Psoas muscle (tissue), 8 donors: ENCODE measurements at regions of chr6 and their contacts with region 1.

Region 1: DNA sequence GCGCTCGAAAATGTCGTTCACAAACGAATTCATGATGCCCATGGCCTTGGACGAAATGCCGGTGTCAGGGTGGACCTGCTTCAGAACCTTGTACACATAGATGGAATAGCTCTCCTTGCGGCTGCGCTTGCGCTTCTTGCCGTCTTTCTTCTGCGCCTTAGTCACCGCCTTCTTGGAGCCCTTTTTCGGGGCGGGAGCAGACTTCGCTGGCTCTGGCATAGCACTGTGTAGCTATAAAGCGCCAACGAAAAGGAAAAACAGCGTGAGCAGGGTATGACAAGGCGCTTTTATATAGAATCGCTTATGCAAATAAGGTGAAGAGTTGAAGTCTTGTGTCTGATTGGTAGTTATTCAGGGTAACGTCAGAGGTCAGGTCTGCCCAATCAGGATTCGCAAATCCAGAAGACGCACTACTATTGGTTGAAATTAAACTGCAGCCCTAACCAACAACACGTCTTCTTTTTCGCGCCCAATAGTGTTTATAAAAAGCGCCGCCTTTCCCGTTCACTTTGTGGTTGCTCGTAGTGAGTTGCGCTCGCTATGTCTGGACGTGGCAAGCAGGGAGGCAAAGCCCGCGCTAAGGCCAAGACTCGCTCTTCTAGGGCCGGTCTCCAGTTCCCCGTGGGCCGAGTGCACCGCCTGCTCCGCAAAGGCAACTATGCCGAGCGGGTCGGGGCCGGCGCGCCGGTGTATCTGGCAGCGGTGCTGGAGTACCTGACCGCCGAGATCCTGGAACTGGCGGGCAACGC is 114.8 kb upstream of the PRSS16 start:
- DNase-seq: peak; percentile 81 to 90
- ATAC-seq: peak; percentile 94 to 97 (median 96)
- H3K4me3 ChIP-seq: peak overlapping the region; percentile 67
- H3K27ac ChIP-seq: peak overlapping the region; percentile 74
- H3K4me1 ChIP-seq: no peaks in the 10 kb centered on the region
- H3K27me3 ChIP-seq: no peaks in the 10 kb centered on the region
- CTCF ChIP-seq: no peak

Region 2: GRCh38 chr6:26025894-26026832 is 1106.5 kb before region 1 on chr6:
- intact Hi-C with region 1: loop called in 1 of 2 experiments (anchors 10 kb)
- DNase-seq: peak; percentile 89 to 92
- ATAC-seq: peak; percentile 67 to 78 (median 71)
- H3K4me3 ChIP-seq: peak overlapping the region; percentile 68
- H3K27ac ChIP-seq: peak overlapping the region; percentile 83
- H3K4me1 ChIP-seq: peaks cover 9% of the 10 kb centered on the region
- H3K27me3 ChIP-seq: peaks cover 0 to 30% (median 2%) of the 10 kb centered on the region in 3 donors
- CTCF ChIP-seq: peak; percentile 71

Region 3: DNA sequence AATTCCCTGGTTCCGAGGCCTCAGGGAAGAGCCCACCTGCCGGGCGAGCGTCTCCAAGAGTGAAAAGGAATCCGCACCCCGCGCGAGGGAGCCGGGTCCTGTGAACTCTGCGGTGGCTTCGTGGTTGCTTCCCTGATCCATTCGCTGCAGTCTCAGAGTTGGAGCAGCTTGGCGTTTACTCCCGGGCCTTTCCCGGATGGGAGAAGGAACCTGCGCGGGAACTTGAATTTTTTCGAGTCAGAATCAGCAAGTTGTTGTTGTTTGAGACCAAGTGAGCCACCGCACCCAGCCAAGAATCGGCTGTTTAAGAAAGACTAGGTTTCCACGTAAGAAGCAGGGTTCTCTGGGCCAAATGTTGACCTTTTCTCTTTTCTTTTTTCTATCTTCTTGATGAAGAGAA is 127.7 kb after region 1 on chr6:
- intact Hi-C with region 1: no loop called
- DNase-seq: no peak
- ATAC-seq: no peak
- H3K4me3 ChIP-seq: no peak overlapping the region
- H3K27ac ChIP-seq: no peak overlapping the region
- H3K4me1 ChIP-seq: no peaks in the 10 kb centered on the region
- H3K27me3 ChIP-seq: peaks cover 7 to 77% (median 8%) of the 10 kb centered on the region in 3 donors
- CTCF ChIP-seq: no peak

Region 4: DNA sequence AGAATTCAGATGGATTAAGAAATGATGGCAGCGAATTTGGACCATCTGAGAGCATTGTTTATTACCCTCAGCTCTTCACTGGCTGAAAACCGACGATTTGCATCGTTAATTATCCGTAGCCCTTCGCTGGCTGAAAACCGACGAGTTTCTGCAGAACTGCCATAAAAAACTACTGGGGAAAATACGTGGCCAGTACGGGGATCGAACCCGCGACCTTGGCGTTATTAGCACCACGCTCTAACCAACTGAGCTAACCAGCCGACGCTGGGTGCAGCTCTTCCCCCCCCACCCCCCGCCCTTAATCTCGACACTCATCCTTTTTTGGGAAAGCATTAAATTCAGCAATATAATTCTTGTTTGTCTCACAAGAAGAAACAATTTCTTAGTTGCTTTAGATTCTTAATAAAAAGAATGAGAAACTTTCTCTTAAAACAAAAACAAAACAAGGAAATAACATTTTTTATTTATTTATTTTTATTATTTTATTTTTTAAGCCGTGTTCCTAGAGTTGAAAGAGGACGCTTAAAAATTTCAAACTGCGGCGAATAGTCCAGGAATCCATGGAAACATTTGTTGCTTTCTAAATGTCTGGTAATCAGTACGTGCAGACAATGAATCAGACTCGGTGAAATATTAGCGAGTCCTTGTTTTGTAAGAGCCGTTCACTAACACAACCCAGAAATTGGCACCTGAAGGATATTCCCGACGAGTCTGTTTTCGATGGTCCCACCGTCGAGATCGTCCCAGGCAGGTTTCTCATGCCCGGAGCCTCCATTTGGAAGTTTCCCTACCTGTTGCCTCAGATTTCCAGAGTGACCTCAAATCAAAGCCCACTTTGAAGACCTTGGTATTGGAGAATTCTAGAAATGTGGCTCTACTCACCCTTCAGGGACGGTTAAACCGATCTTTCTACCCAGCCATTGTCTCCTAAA is 142.6 kb after region 1 on chr6:
- intact Hi-C with region 1: no loop called
- DNase-seq: no peak
- ATAC-seq: no peak
- H3K4me3 ChIP-seq: no peak overlapping the region
- H3K27ac ChIP-seq: no peak overlapping the region
- H3K4me1 ChIP-seq: no peaks in the 10 kb centered on the region
- H3K27me3 ChIP-seq: peaks cover 15 to 77% (median 20%) of the 10 kb centered on the region in 3 donors
- CTCF ChIP-seq: no peak

Region 5: DNA sequence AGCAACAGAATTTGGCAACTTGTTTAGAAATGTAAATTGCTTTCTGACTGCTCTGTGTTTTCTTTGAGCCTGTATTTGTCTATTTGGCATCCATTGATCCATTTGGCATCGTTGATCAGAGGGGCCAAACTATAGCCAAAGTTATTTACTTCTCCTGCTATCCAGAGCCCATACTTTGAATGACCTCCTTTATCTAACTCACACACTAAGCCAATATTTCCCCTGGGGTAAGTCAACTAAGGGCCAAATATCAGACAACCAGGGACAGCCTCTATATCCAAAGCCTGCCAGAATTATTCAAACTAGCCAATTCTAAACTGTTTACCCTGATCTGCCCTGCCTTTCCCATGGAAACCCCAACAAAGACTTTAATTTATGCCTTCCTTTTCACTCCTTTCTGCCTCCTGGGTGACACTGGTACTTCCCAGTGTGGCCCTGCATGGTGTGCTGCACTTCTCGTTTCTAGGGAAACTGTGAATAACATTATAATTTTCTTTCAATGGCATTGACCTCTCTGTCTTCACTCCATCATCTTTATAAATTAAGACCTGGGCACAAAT is 360.0 kb after region 1 on chr6:
- intact Hi-C with region 1: no loop called
- DNase-seq: no peak
- ATAC-seq: no peak
- H3K4me3 ChIP-seq: no peak overlapping the region
- H3K27ac ChIP-seq: no peak overlapping the region
- H3K4me1 ChIP-seq: peaks cover 4% of the 10 kb centered on the region
- H3K27me3 ChIP-seq: peaks cover 4 to 36% (median 6%) of the 10 kb centered on the region in 3 donors
- CTCF ChIP-seq: no peak